ENCODE measurements at regions of chr4 and their contacts with region 1.

Region 1: GRCh38 chr4:142353149-142353738 is 492.9 kb downstream of the INPP4B start:
- DNase-seq: no peak
- H3K4me3 Mint-ChIP-seq: no peak overlapping the region
- H3K27ac Mint-ChIP-seq: peak overlapping the region; percentile 51
- H3K4me1 Mint-ChIP-seq: peaks cover 91% of the 10 kb centered on the region
- H3K27me3 Mint-ChIP-seq: no peaks in the 10 kb centered on the region

Region 2: GRCh38 chr4:142341268-142341667 is 12.0 kb before region 1 on chr4:
- CTCF ChIA-PET with region 1: interaction called, 26 read pairs
- POLR2A ChIA-PET with region 1: interaction called, 7 read pairs
- DNase-seq: no peak
- H3K4me3 Mint-ChIP-seq: no peak overlapping the region
- H3K27ac Mint-ChIP-seq: no peak overlapping the region
- H3K4me1 Mint-ChIP-seq: peaks cover 11% of the 10 kb centered on the region
- H3K27me3 Mint-ChIP-seq: no peaks in the 10 kb centered on the region

Region 3: GRCh38 chr4:142365387-142365786 is 12.1 kb after region 1 on chr4:
- CTCF ChIA-PET with region 1: interaction called, 6 read pairs
- POLR2A ChIA-PET with region 1: interaction called, 11 read pairs
- DNase-seq: no peak
- H3K4me3 Mint-ChIP-seq: no peak overlapping the region
- H3K27ac Mint-ChIP-seq: no peak overlapping the region
- H3K4me1 Mint-ChIP-seq: peaks cover 54% of the 10 kb centered on the region
- H3K27me3 Mint-ChIP-seq: no peaks in the 10 kb centered on the region

Region 4: GRCh38 chr4:142379277-142380057 is 26.2 kb after region 1 on chr4:
- CTCF ChIA-PET with region 1: interaction called, 18 read pairs
- POLR2A ChIA-PET with region 1: interaction called, 11 read pairs
- DNase-seq: no peak
- H3K4me3 Mint-ChIP-seq: no peak overlapping the region
- H3K27ac Mint-ChIP-seq: peak overlapping the region; percentile 9
- H3K4me1 Mint-ChIP-seq: peaks cover 66% of the 10 kb centered on the region
- H3K27me3 Mint-ChIP-seq: no peaks in the 10 kb centered on the region

Region 5: DNA sequence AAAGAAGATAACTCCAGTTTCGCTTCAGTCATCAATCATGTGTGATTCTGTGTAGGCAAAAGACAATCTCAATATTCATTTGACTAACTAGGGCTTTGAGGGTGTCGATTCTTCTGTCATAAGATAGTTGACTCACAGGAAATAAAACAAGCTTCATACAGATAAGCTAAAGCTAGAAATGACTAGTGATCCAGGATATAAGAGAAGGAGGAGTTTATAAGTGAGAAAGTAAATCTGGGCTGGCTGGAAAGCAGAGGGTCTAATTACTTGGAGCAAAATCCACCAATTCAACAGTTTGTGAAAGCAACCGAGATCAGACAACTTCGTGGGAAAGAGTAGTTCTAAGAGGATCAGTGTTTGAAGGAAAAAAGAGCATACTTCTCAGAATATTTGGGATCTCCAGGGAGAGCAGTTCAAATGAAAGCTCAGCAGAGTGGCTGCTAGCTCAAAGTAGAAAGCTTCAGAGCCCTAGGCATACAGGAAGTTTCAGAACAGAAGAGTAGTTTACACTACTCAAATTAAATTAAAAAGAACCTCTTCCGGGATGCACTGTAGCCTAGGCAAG is 63.5 kb after region 1 on chr4:
- CTCF ChIA-PET with region 1: interaction called, 11 read pairs
- POLR2A ChIA-PET with region 1: interaction called, 13 read pairs
- DNase-seq: no peak
- H3K4me3 Mint-ChIP-seq: peak overlapping the region; percentile 63
- H3K27ac Mint-ChIP-seq: peak overlapping the region; percentile 98
- H3K4me1 Mint-ChIP-seq: peaks cover 39% of the 10 kb centered on the region
- H3K27me3 Mint-ChIP-seq: no peaks in the 10 kb centered on the region

Region 6: DNA sequence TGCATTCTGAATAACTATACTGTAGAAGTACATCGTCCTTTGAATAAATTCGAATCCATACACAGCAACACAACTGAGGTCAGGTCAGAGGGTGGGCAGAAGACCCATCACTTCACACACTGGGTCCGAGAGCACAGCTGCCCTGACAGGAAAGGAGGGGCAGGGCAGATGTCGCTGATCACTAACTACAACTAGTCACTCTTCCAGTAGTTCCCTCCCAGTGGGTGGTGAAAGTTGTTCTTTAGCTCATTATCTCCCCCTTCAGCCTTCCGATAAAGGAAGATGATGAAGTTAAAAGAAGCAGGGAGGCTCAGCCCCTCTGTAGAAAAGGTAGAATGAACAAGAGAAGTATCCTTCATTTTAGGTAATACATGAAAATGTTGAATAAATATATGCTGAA is 214.0 kb after region 1 on chr4:
- CTCF ChIA-PET with region 1: interaction called, 70 read pairs
- POLR2A ChIA-PET with region 1: interaction called, 42 read pairs
- DNase-seq: peak; percentile 68
- H3K4me3 Mint-ChIP-seq: peak overlapping the region; percentile 82
- H3K27ac Mint-ChIP-seq: peak overlapping the region; percentile 96
- H3K4me1 Mint-ChIP-seq: peaks cover 63% of the 10 kb centered on the region
- H3K27me3 Mint-ChIP-seq: no peaks in the 10 kb centered on the region

Region 7: GRCh38 chr4:142719854-142720541 is 366.8 kb after region 1 on chr4:
- CTCF ChIA-PET with region 1: interaction called, 35 read pairs
- POLR2A ChIA-PET with region 1: no interaction called
- DNase-seq: no peak
- H3K4me3 Mint-ChIP-seq: no peak overlapping the region
- H3K27ac Mint-ChIP-seq: no peak overlapping the region
- H3K4me1 Mint-ChIP-seq: peaks cover 4% of the 10 kb centered on the region
- H3K27me3 Mint-ChIP-seq: no peaks in the 10 kb centered on the region